ENCODE measurements at regions of chr21 and their contacts with region 1.

Region 1: DNA sequence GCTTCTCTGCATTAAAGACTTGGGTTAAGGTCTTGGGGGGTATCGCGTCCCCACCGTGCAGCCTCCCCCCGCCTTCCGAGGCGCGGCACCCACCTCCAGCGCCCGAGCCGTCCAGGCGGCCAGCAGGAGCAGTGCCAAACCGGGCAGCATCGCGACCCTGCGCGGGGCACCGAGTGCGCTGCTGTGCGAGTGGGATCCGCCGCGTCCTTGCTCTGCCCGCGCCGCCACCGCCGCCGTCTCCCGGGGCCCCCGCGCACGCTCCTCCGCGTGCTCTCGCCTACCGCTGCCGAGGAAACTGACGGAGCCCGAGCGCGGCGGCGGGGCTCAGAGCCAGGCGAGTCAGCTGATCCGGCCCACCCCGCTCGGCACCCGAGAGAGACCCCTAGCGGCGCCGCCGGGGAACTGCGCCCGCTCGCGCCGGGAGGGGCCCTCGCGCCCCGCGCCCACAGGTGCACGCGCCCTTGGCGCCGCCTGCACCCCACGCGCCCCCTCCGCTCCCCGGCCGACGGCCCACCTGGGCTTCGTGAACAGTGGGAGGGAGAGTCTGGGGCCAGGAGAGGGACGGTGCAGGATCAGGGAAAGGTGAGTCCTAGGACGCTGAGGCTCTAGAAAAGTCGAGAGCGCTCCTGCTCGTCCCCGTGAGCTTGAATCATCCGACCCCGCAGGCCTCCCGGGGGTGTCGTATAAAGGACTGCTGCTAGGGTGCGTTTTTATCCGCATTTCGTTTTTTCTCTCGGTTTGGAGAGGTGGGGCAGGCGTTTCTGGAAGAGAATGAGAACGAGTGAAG is at the start of gene APP:
- DNase-seq: no peak
- ATAC-seq: peak; percentile 82
- H3K4me3 ChIP-seq: peak within 1 kb of the TSS; percentile 79 to 81
- H3K27ac ChIP-seq: peak within 1 kb of the TSS; percentile 84
- H3K4me1 ChIP-seq: peaks cover 18% of the 10 kb centered on the region
- H3K27me3 ChIP-seq: no peaks in the 10 kb centered on the region
- CTCF ChIP-seq: peak; percentile 95
- total RNA-seq, gene APP: 542 TPM

Region 2: DNA sequence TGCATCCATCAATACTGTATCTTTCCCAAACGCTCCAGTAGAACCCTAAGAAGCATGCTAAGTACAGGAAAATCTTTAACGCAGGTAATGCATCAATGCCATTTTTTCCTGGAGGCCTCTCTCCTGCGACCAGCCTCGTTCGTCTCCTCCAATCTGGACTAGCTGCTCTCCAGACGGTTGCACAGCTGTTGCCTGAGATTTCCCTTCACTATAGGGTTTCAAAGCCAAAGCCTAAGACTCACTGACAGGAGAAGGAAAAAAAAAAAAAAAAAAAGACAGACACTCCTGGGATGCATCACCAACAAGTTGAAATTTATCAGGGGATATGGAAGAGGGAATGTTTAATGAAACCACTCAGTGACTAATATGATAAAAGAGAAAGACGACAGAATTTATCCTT is 93.1 kb before region 1 on chr21:
- CTCF ChIA-PET with region 1: no interaction called
- POLR2A ChIA-PET with region 1: no interaction called
- in situ Hi-C with region 1: no loop called
- intact Hi-C with region 1: no loop called
- DNase-seq: no peak
- ATAC-seq: no peak
- H3K4me3 ChIP-seq: no peak overlapping the region
- H3K27ac ChIP-seq: no peak overlapping the region
- H3K4me1 ChIP-seq: peaks cover 4% of the 10 kb centered on the region
- H3K27me3 ChIP-seq: no peaks in the 10 kb centered on the region
- CTCF ChIP-seq: no peak

Region 3: GRCh38 chr21:26715878-26716506 is 545.3 kb after region 1 on chr21:
- CTCF ChIA-PET with region 1: no interaction called
- POLR2A ChIA-PET with region 1: no interaction called
- in situ Hi-C with region 1: no loop called
- intact Hi-C with region 1: loop called (anchors 10 kb)
- DNase-seq: no peak
- ATAC-seq: peak; percentile 74; the same call in 1 of the 2 replicates
- H3K4me3 ChIP-seq: no peak overlapping the region
- H3K27ac ChIP-seq: no peak overlapping the region
- H3K4me1 ChIP-seq: no peaks in the 10 kb centered on the region; the same call in 1 of the 2 replicates
- H3K27me3 ChIP-seq: no peaks in the 10 kb centered on the region
- CTCF ChIP-seq: peak; percentile 77

Measured in Panc1 (cell line).